Posterior vena cava (tissue), 2 donors: ENCODE measurements at regions of chr12 and their contacts with region 1.

Region 1: DNA sequence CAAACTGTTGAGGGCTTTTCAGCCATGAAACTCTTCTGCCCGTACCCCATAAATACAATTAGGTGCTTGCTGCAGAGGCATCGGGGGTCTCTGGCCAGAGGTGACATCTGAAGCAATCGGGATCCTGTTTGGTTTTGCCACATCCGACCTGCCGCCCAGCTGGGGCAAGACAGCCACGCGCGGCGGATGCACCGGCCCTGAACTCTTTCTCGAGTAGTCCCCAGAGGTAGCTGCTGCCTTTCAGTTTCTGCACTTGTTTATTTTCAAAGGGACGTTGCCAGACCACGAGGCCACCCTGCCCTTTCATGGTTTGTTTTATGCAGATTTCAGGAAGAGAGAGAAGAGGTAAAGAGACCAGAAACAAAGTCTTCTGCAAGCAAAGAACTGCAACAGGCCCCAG is 10.6 kb upstream of the MLXIP start:
- DNase-seq: no peak

Region 2: GRCh38 chr12:120237360-120238223 is 1830.4 kb before region 1 on chr12:
- intact Hi-C with region 1: no loop called
- DNase-seq: peak; percentile 96

Region 3: DNA sequence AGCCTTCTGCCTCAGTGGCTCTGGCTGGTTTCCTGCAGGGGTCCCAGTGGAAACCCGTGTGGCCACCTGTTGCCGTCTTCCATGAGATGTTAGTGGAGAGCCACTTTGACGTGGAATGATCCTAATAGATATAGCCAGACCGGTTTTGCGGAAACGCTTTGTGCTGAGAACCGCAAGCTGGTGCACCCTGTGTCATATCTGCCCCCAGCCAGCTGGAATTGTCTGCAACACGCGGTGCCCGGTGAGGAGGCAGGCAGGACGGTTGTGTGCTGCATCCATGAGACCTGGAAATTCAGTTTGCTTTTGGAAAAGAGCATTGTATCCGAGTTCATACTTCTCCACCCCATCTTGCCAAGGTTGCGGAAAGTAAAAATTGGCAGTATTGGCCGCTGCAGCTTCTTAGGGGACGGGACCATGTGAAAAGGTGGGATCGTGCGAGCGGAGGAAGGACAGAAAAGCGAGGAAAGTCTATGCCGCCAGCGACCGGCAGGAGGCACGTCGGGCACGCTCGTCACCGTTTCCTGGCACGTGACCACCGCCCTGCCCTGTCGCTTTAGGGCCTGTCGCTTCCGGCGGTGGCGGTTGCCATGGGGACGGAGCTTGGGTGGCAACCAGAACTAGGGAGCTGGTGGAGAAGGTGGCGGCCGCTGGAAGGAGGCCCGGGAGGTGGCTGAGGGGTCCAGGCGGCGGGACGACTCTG is 149.8 kb before region 1 on chr12 and contains the start of gene CFAP251:
- intact Hi-C with region 1: no loop called
- DNase-seq: peak; percentile 98
- total RNA-seq, gene CFAP251: 0.65 to 1.9 TPM

Region 4: GRCh38 chr12:122107261-122107660 is 39.3 kb after region 1 on chr12:
- intact Hi-C with region 1: loop called in 1 of 2 experiments (anchors 5 kb)
- DNase-seq: no peak